Psoas muscle (tissue), 8 donors: ENCODE measurements at regions of chr11 and their contacts with region 1.

Region 1: GRCh38 chr11:1943977-1944376 is 3.2 kb upstream of the MRPL23 start:
- DNase-seq: peak in 1 of 2 donors; percentile 41
- ATAC-seq: no peak
- H3K4me3 ChIP-seq: no peak overlapping the region
- H3K27ac ChIP-seq: no peak overlapping the region
- H3K4me1 ChIP-seq: no peaks in the 10 kb centered on the region
- H3K27me3 ChIP-seq: no peaks in the 10 kb centered on the region
- CTCF ChIP-seq: no peak

Region 2: GRCh38 chr11:1889224-1890120 is 54.5 kb before region 1 on chr11:
- intact Hi-C with region 1: loop called (anchors 1 to 10 kb)
- DNase-seq: peak in 1 of 2 donors; percentile 48
- ATAC-seq: peak in 1 of 4 donors; percentile 8
- H3K4me3 ChIP-seq: no peak overlapping the region
- H3K27ac ChIP-seq: no peak overlapping the region
- H3K4me1 ChIP-seq: peaks cover 35% of the 10 kb centered on the region
- H3K27me3 ChIP-seq: no peaks in the 10 kb centered on the region
- CTCF ChIP-seq: no peak